WTC11 (cell line): ENCODE measurements at regions of chr1 and their contacts with region 1.

Region 1: GRCh38 chr1:248873409-248873992 is 14.6 kb upstream of the ZNF692 start:
- DNase-seq: peak; percentile 97
- ATAC-seq: peak; percentile 76
- H3K4me3 Mint-ChIP-seq: peak overlapping the region; percentile 96
- H3K27ac Mint-ChIP-seq: peak overlapping the region; percentile 99
- H3K4me1 Mint-ChIP-seq: peaks cover 3% of the 10 kb centered on the region; the same call in 1 of the 2 replicates
- H3K27me3 Mint-ChIP-seq: peaks cover 8% of the 10 kb centered on the region
- CTCF ChIP-seq: no peak

Region 2: DNA sequence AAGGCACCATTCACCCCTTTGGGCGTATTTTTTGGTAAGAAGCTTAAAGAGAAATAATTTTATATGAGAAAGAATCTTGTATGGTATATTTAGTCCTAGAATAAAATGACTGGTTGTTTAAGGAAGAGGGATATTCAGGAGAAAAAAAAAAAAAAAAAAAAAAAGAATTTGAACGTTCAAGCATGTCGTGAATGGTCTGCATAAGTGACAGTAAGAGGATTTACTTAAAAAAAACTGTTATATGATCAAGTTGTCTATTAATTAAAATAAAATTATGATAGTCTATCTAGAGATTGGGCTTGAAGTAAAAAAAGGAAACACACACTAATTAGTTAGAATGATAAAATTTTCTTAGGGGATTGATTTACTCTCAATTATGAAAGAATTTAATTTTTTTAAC is 159.3 kb before region 1 on chr1:
- CTCF ChIA-PET with region 1: no interaction called
- POLR2A ChIA-PET with region 1: no interaction called
- DNase-seq: no peak
- ATAC-seq: no peak
- H3K4me3 Mint-ChIP-seq: no peak overlapping the region
- H3K27ac Mint-ChIP-seq: no peak overlapping the region
- H3K4me1 Mint-ChIP-seq: no peaks in the 10 kb centered on the region
- H3K27me3 Mint-ChIP-seq: peaks cover 6% of the 10 kb centered on the region
- CTCF ChIP-seq: no peak

Region 3: DNA sequence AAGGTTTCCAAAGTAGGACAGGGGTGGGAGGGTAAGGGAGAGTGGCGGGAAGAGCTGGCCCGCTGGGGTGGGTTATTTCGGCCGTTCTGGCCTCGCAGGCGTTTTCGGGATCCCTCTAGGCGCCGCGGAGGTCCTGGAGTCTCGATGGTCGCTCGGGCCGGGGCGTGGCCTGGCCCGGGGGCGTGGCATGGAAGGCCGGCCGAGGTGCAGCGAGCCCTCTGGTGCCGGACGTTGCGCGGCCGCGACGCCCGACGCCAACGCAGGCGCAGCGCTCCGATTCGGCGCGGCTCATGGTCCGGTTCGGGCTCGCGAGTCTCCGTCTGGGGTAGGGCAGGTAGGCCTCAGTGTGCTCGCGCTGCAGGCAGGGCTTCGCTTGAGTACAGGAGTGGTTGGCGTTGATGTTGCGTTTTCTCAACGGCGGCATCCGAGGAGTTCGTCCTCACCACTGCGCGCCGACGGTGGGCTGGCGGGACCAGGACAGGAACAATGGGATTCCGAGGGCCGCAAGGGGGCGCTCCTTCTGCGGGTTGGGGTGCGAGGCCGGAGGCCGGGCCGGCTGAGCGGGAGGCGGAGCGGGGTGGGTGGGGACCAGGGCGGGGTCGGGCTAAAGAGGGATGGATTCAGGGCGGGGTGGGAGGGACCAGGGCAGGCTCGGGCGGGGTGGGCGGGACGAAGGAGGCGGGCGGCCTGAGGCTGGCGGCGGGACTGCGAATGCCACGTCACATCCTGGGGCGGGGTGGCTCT is 32.7 kb after region 1 on chr1 and contains the start of gene PGBD2:
- CTCF ChIA-PET with region 1: interaction called, 14 read pairs
- POLR2A ChIA-PET with region 1: interaction called, 4 read pairs
- DNase-seq: peak; percentile 98
- ATAC-seq: peak; percentile 90
- H3K4me3 Mint-ChIP-seq: peak within 1 kb of the TSS; percentile 92
- H3K27ac Mint-ChIP-seq: peak within 1 kb of the TSS; percentile 100
- H3K4me1 Mint-ChIP-seq: peaks cover 35% of the 10 kb centered on the region
- H3K27me3 Mint-ChIP-seq: peaks cover 4% of the 10 kb centered on the region; the same call in 1 of the 2 replicates
- CTCF ChIP-seq: peak; percentile 62
- total RNA-seq, gene PGBD2: 6.5 to 6.9 TPM (median 6.6 TPM) in 3 replicates